GM12878 (cell line): ENCODE measurements at regions of chr13 and their contacts with region 1.

Region 1: DNA sequence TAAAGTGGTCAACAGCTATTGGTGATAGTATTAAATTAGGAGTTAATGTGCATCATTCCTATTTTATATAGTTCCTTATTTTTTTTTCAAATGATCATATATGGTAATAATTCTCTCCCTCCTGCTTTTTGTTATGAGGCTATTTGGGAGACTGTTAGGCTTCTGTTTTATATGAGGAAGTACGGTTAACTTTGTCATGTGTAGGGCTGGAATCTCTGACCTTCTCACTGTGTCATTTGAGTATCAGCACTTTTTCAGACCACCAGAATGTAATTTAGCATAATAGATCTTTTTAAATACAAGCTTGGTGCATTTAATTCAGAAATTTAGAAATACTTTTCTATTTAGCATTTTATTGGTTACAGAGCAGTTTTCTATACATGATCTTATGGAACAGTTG is 7.7 kb downstream of the DGKH start:
- DNase-seq: no peak
- ATAC-seq: peak; percentile 28; the same call in 2 of the 3 replicates
- H3K4me3 ChIP-seq: no peak overlapping the region
- H3K27ac ChIP-seq: no peak overlapping the region
- H3K4me1 ChIP-seq: peaks cover 5% of the 10 kb centered on the region; the same call in 1 of the 2 replicates
- H3K27me3 ChIP-seq: no peaks in the 10 kb centered on the region
- CTCF ChIP-seq: no peak
- EP300 ChIP-seq: no peak
- POLR2A ChIP-seq: no peak
- RAD21 ChIP-seq: no peak

Region 2: GRCh38 chr13:41802684-41803444 is 253.3 kb before region 1 on chr13:
- CTCF ChIA-PET with region 1: no interaction called
- POLR2A ChIA-PET with region 1: no interaction called
- RAD21 ChIA-PET with region 1: no interaction called
- SMC1A ChIA-PET with region 1: no interaction called
- in situ Hi-C with region 1: no loop called
- intact Hi-C with region 1: no loop called
- DNase-seq: no peak
- ATAC-seq: no peak
- H3K4me3 ChIP-seq: no peak overlapping the region
- H3K27ac ChIP-seq: no peak overlapping the region
- H3K4me1 ChIP-seq: no peaks in the 10 kb centered on the region
- H3K27me3 ChIP-seq: no peaks in the 10 kb centered on the region
- CTCF ChIP-seq: no peak
- EP300 ChIP-seq: no peak
- POLR2A ChIP-seq: no peak
- RAD21 ChIP-seq: no peak

Region 3: DNA sequence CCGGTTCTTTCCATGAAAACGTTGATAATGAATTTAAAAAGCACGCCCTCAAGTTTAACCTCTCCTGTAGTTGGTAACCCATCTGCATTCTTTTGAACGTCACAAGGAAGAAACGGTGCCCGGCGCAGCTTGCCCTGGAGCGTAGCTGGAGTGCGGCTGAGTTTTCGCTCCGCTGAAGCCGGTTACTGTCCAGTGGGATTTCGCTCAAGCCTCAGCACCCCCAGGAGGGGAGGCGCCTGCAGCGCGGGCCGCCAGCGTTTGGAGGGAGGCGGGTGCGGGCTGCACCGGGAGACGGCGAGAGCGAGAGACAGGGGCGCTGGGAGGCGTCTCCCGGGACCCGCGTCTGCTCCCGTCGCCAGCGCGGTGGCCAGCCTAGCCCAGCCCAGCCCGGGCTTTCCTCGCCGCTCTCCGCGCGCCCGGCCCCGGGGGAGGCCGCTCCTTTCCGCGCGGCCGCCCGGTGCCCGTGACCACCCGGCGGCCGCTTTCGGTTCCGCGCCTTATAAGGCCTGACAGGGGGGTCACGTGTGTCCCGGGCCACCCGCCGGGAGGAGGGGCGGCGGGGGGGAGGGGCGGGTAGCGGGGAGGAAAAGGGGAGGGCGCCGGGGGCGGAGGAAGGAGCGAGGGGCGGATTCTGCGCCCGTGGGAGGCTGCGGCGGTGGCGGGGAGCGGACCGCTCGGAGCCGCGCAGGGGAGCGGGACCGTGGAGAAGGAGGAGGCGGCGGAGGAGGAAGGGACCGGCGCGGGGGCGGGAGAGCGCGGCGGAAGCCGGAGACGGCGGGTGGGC is 16.0 kb before region 1 on chr13:
- CTCF ChIA-PET with region 1: interaction called, 7 read pairs
- POLR2A ChIA-PET with region 1: interaction called, 6 read pairs
- RAD21 ChIA-PET with region 1: interaction called, 6 read pairs
- SMC1A ChIA-PET with region 1: interaction called, 12 read pairs
- in situ Hi-C with region 1: no loop called
- intact Hi-C with region 1: no loop called
- DNase-seq: peak; percentile 25
- ATAC-seq: peak; percentile 82
- H3K4me3 ChIP-seq: peak overlapping the region; percentile 88
- H3K27ac ChIP-seq: peak overlapping the region; percentile 76
- H3K4me1 ChIP-seq: no peaks in the 10 kb centered on the region; the same call in 1 of the 2 replicates
- H3K27me3 ChIP-seq: no peaks in the 10 kb centered on the region
- CTCF ChIP-seq: no peak
- EP300 ChIP-seq: no peak
- POLR2A ChIP-seq: peak; percentile 97
- RAD21 ChIP-seq: no peak

Region 4: GRCh38 chr13:42078128-42078808 is 22.1 kb after region 1 on chr13:
- CTCF ChIA-PET with region 1: interaction called, 4 read pairs
- POLR2A ChIA-PET with region 1: no interaction called
- RAD21 ChIA-PET with region 1: interaction called, 11 read pairs
- SMC1A ChIA-PET with region 1: interaction called, 19 read pairs
- in situ Hi-C with region 1: no loop called
- intact Hi-C with region 1: no loop called
- DNase-seq: no peak
- ATAC-seq: no peak
- H3K4me3 ChIP-seq: no peak overlapping the region
- H3K27ac ChIP-seq: no peak overlapping the region
- H3K4me1 ChIP-seq: no peaks in the 10 kb centered on the region
- H3K27me3 ChIP-seq: no peaks in the 10 kb centered on the region
- CTCF ChIP-seq: no peak; a peak in 1 of 6 replicates
- EP300 ChIP-seq: no peak
- POLR2A ChIP-seq: no peak
- RAD21 ChIP-seq: no peak